Activated T-helper 1 cell treated with anti-CD3 and anti-CD28 coated beads, Interleukin-12 subunit alpha, Interleukin-12 subunit beta, Interleukin-2, Interleukin-4 antibody, amounts not matched to agents 30 ng/mL and 10 ng/mL and 1 ng/mL, durations not matched to agents 14 hours and 24 hours and 36 hours (primary cell): ENCODE measurements at regions of chr15 and their contacts with region 1.

Region 1: DNA sequence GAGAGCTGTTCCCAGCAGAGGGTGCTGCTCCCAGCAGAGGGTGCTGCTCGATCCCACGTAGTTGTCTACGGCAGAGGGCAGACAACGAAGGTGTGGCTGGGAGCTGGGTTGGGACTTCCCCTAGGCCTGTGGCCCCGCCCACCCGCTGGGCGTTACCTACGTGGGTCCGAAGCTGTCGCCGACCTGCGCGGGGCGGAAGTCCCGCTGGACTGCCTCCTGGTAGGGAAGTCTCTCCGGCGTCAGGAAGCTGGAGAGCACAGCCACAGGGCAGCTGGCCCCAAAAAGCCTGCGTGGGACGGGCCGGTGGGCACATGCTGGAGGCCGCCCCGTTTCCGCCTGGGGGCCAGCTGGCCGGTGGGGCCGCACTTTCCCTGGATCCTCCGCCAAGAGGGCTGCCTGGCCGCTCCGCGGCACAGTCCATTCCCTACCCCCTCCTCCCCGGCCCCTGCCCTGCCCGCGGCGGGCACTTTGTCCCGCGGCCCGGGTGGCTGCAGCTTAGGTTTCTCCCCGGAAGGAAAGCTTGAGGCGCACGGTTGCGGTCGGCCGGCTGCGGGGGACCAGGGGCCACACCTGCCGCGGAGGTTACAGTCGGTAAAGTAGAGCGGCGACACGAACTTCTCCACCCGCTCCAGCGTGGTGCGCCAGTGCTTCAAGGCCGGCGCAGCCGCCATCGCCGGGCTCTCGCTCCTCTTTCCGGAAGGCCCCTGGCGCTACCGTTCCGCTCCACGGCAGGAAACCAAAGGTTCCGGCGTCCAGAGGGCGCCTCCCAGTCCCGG is at the start of gene MAN2C1:
- DNase-seq: peak; percentile 91
- H3K4me3 Mint-ChIP-seq: peak within 1 kb of the TSS; percentile 94
- H3K27ac Mint-ChIP-seq: peak within 1 kb of the TSS; percentile 92
- H3K4me1 Mint-ChIP-seq: peaks cover 16% of the 10 kb centered on the region
- H3K27me3 Mint-ChIP-seq: no peaks in the 10 kb centered on the region
- total RNA-seq, gene MAN2C1: 250 and 254 TPM in 2 replicates

Region 2: DNA sequence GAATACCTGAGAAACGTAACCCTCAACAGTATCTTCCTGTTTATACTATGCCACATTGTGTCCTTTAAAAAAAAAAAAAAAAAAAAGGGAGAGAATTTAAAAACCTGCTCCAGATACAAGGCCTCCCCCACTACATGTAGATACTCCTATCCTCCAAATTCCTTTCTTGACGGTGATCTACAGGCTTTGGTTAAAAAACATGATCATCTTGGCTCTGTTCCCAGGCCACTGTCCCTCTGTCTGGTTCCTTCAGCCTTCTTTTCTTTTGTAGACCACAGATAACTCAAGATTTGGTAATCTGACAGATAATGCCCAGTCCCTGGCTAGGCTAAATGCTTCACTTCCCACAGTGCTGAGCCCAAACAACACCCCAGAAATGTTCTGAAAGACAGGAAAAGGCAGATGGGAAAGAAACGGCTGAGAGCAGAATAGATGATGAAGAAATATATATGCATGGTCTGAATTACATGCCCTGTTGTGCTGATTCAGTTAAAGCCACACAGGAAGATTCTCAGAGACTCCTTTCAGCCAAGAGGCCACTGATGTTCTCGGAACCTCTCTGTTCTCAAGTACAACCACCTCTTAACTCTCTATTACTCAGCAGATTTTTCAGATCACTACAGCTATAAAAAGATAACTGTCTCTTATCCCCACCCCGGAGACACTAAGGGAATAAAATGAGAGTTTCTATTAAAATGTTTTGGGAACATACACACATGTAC is 1783.2 kb before region 1 on chr15:
- intact Hi-C with region 1: no loop called
- DNase-seq: no peak
- H3K4me3 Mint-ChIP-seq: no peak overlapping the region
- H3K27ac Mint-ChIP-seq: peak overlapping the region; percentile 60
- H3K4me1 Mint-ChIP-seq: peaks cover 65% of the 10 kb centered on the region
- H3K27me3 Mint-ChIP-seq: no peaks in the 10 kb centered on the region

Region 3: GRCh38 chr15:74489518-74490338 is 878.4 kb before region 1 on chr15:
- intact Hi-C with region 1: no loop called
- DNase-seq: peak; percentile 63
- H3K4me3 Mint-ChIP-seq: no peak overlapping the region
- H3K27ac Mint-ChIP-seq: peak overlapping the region; percentile 64
- H3K4me1 Mint-ChIP-seq: peaks cover 13% of the 10 kb centered on the region
- H3K27me3 Mint-ChIP-seq: no peaks in the 10 kb centered on the region

Region 4: GRCh38 chr15:75023181-75023871 is 344.8 kb before region 1 on chr15 and contains the start of gene PPCDC:
- intact Hi-C with region 1: loop called (anchors 1 kb)
- DNase-seq: peak; percentile 93
- H3K4me3 Mint-ChIP-seq: peak within 1 kb of the TSS; percentile 96
- H3K27ac Mint-ChIP-seq: peak within 1 kb of the TSS; percentile 90
- H3K4me1 Mint-ChIP-seq: peaks cover 23% of the 10 kb centered on the region
- H3K27me3 Mint-ChIP-seq: no peaks in the 10 kb centered on the region
- total RNA-seq, gene PPCDC: 25.0 and 27.1 TPM in 2 replicates

Region 5: DNA sequence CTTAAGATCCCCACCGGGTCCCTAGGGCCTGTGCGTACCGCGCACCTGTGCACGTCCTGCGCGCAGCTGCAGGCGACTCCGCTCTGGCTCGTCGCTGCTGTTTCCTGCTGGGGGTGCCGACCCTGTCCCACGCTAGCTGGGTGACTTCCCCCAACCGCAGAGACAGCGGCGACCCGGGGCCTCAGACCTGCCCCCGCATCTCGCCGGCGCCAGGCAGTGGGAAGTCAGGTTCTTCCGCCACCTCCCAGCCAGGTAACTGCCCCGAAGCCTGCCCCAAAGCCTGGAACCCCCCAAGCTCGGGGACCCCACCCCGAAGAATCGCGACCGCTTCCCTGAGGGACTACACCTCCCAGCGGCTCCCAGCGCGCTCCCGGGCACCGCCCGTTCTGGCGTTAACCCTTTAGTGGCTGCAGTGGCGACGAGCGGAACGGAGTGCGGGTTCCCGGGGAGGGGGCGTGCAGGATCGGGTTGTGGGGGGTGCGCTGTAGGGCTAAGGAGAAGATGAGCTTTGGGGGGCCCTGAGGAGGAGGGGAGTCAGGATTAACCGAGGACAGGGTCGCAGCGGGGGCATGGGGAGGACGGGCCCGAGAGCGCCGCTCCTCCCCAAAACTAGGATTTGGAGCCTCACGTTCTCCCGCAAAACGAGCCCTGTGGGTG is 20.8 kb before region 1 on chr15:
- intact Hi-C with region 1: loop called (anchors 2 kb)
- DNase-seq: peak; percentile 28
- H3K4me3 Mint-ChIP-seq: peak overlapping the region; percentile 75
- H3K27ac Mint-ChIP-seq: peak overlapping the region; percentile 24
- H3K4me1 Mint-ChIP-seq: peaks cover 26% of the 10 kb centered on the region
- H3K27me3 Mint-ChIP-seq: peaks cover 21% of the 10 kb centered on the region

Region 6: DNA sequence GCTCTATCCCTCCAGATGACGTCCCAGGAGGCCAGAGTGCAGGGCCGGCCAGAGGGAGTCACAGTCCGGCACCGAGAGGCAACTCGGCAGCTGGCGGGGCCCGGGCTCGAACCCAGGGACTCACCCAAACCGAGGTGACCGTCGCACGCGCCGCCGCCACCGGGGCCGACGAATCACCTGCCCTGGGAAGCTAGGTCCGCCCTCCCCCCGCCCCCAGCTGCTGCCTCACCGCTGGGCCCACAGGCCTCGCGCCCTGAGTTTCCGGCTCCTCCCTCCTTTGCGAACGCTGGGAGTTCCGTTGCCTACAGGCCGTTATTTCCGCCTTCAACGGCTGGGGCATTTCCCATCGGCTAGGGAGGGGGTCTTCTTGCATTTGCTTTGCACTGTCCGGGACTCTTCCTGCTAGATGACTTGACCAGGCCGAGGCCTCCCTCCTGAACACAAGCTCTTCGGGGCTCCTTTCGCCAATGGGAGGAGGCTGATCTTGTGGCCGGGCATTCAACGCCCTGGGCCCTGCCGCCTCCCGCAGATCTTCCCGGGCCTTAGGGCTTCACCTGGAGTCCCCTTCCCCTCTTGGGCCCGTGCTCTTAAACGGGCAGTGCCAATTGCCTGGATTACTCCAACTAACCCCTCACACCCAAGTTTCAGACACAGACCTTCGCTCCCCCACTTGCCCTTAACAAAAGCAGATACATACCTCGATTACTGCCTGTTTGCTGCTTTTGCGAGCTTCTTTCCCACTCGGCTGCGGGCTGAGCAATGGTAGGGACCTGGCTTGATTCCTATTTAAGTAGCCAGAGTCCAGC is 257.6 kb after region 1 on chr15 and contains the start of gene SNUPN:
- intact Hi-C with region 1: loop called (anchors 1 kb)
- DNase-seq: peak; percentile 90
- H3K4me3 Mint-ChIP-seq: peak within 1 kb of the TSS; percentile 94
- H3K27ac Mint-ChIP-seq: peak within 1 kb of the TSS; percentile 100
- H3K4me1 Mint-ChIP-seq: peaks cover 38% of the 10 kb centered on the region
- H3K27me3 Mint-ChIP-seq: no peaks in the 10 kb centered on the region
- total RNA-seq, gene SNUPN: 30.8 and 34.1 TPM in 2 replicates

Region 7: DNA sequence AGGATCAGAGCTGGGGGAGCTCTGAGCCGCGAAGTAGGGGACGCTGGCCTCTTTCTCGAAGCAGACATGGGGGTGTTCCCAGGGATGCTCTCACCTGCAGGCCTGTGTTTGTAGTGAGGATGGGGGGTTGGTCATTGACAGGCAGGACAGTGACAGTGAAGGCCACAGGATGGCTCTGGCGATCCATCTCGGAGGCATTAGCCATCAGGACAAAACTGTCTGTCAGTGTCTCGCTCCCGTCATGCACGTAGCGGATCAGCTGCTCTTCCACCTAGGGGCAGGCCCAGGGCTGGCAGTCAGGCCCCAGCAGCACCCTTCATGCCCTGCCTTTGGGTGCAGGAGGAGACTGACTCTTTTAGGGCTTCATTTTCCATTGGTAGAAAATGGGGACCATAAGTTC is 316.5 kb after region 1 on chr15:
- intact Hi-C with region 1: loop called (anchors 1 kb)
- DNase-seq: no peak
- H3K4me3 Mint-ChIP-seq: no peak overlapping the region
- H3K27ac Mint-ChIP-seq: no peak overlapping the region
- H3K4me1 Mint-ChIP-seq: no peaks in the 10 kb centered on the region
- H3K27me3 Mint-ChIP-seq: no peaks in the 10 kb centered on the region